Sigmoid colon (tissue), 7 donors: ENCODE measurements at regions of chr12 and their contacts with region 1.

Region 1: DNA sequence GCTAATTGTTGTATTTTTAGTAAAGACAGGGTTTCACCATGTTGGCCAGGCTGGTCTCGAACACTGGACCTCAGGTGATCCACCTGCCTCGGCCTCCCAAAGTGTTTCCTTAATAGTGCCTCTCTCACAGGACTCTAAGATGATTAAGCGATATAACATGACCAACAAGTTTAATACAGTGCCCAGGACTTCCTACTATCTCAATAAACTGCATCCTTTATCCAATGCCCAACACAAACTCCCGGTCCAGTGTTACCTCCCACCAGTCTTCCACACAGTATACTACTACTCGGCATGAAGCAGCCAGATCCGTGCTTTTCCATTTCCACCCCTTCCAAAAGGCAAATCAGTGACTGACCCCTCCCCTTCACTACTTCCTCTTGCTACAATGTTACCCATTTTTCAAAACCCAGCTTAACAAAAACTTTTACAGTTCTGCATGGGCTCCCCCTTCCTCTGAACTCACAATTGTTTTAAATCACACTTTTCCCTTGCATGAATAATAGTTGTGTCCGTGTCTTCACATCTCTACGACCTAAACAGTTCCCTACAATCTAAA is 900 bp downstream of the NOP2 start:
- DNase-seq: no peak
- H3K4me3 ChIP-seq: peak overlapping the region in 3 of 4 donors; percentile 56 to 72 (median 71)
- H3K27ac ChIP-seq: peak overlapping the region in 3 of 4 donors; percentile 75 to 92 (median 87)
- H3K4me1 ChIP-seq: peaks cover 2 to 26% (median 17%) of the 10 kb centered on the region in 4 donors
- H3K27me3 ChIP-seq: no peaks in the 10 kb centered on the region
- CTCF ChIP-seq: no peak
- EP300 ChIP-seq: no peak
- POLR2A ChIP-seq: no peak

Region 2: GRCh38 chr12:5817246-5817645 is 749.9 kb before region 1 on chr12:
- intact Hi-C with region 1: no loop called
- DNase-seq: no peak
- H3K4me3 ChIP-seq: no peak overlapping the region
- H3K27ac ChIP-seq: no peak overlapping the region
- H3K4me1 ChIP-seq: no peaks in the 10 kb centered on the region
- H3K27me3 ChIP-seq: no peaks in the 10 kb centered on the region
- CTCF ChIP-seq: no peak
- EP300 ChIP-seq: no peak
- POLR2A ChIP-seq: no peak

Region 3: DNA sequence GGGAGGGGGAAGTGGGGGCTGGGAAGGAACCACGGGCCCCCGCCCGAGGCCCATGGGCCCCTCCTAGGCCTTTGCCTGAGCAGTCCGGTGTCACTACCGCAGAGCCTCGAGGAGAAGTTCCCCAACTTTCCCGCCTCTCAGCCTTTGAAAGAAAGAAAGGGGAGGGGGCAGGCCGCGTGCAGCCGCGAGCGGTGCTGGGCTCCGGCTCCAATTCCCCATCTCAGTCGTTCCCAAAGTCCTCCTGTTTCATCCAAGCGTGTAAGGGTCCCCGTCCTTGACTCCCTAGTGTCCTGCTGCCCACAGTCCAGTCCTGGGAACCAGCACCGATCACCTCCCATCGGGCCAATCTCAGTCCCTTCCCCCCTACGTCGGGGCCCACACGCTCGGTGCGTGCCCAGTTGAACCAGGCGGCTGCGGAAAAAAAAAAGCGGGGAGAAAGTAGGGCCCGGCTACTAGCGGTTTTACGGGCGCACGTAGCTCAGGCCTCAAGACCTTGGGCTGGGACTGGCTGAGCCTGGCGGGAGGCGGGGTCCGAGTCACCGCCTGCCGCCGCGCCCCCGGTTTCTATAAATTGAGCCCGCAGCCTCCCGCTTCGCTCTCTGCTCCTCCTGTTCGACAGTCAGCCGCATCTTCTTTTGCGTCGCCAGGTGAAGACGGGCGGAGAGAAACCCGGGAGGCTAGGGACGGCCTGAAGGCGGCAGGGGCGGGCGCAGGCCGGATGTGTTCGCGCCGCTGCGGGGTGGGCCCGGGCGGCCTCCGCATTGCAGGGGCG is 33.1 kb before region 1 on chr12 and contains the start of gene GAPDH:
- intact Hi-C with region 1: no loop called
- DNase-seq: peak; percentile 97
- H3K4me3 ChIP-seq: peak within 1 kb of the TSS; percentile 76 to 91 (median 88)
- H3K27ac ChIP-seq: peak within 1 kb of the TSS; percentile 97 to 98 (median 98)
- H3K4me1 ChIP-seq: peaks cover 0 to 60% (median 47%) of the 10 kb centered on the region in 4 donors
- H3K27me3 ChIP-seq: no peaks in the 10 kb centered on the region
- CTCF ChIP-seq: no peak
- EP300 ChIP-seq: peak in 1 of 4 donors; percentile 21
- POLR2A ChIP-seq: peak; percentile 96 to 98
- total RNA-seq, gene GAPDH: 1,653 to 2,501 (median 2,098) TPM

Region 4: DNA sequence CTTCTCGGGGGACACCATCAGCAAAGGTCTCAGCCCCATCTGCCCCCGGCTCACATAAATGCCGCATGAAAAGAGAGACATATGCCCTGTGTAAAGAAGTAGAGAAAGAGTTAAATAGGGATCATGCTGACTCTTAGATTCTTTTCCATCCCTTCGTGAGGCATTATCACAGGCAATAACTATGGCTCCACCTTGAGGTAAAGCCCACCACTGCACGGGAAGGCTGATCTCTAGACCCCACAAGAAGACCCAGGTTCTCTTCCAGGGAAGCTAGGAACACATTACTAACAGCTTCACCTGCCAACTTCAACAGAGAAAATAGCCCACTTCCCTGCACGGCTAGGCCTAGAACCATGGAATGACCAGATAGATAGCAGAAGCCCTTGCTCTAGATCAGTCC is 15.0 kb after region 1 on chr12:
- intact Hi-C with region 1: no loop called
- DNase-seq: no peak
- H3K4me3 ChIP-seq: no peak overlapping the region
- H3K27ac ChIP-seq: no peak overlapping the region
- H3K4me1 ChIP-seq: no peaks in the 10 kb centered on the region
- H3K27me3 ChIP-seq: no peaks in the 10 kb centered on the region
- CTCF ChIP-seq: no peak
- EP300 ChIP-seq: no peak
- POLR2A ChIP-seq: no peak

Region 5: GRCh38 chr12:6607751-6608591 is 40.8 kb after region 1 on chr12:
- intact Hi-C with region 1: loop called (anchors 5 kb)
- DNase-seq: peak; percentile 82
- H3K4me3 ChIP-seq: no peak overlapping the region
- H3K27ac ChIP-seq: peak overlapping the region; percentile 92 to 100 (median 98)
- H3K4me1 ChIP-seq: peaks cover 0 to 65% (median 56%) of the 10 kb centered on the region in 4 donors
- H3K27me3 ChIP-seq: no peaks in the 10 kb centered on the region
- CTCF ChIP-seq: no peak
- EP300 ChIP-seq: no peak
- POLR2A ChIP-seq: no peak

Region 6: DNA sequence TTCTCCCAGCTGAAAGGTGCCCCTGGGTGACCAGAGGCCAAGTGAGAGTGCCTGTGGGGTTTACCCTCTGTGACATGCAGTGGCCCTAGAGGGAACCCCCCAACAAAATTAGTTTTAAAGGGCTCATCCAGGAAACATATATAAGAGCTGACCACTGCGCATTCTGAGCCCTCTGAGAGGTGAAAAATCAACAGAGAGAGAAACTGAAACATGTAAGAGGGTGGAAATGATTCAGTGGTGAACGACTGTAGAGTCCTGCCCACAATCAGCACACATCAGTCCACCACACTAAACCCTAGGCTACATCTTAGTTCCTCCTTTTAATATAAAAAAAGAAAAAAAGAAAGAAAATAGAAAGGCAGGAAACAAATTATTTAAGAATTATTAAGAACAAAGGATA is 715.7 kb after region 1 on chr12:
- intact Hi-C with region 1: no loop called
- DNase-seq: no peak
- H3K4me3 ChIP-seq: no peak overlapping the region
- H3K27ac ChIP-seq: no peak overlapping the region
- H3K4me1 ChIP-seq: no peaks in the 10 kb centered on the region
- H3K27me3 ChIP-seq: no peaks in the 10 kb centered on the region
- CTCF ChIP-seq: no peak
- EP300 ChIP-seq: no peak
- POLR2A ChIP-seq: no peak